ENCODE measurements at regions of chr12 and their contacts with region 1.

Region 1: DNA sequence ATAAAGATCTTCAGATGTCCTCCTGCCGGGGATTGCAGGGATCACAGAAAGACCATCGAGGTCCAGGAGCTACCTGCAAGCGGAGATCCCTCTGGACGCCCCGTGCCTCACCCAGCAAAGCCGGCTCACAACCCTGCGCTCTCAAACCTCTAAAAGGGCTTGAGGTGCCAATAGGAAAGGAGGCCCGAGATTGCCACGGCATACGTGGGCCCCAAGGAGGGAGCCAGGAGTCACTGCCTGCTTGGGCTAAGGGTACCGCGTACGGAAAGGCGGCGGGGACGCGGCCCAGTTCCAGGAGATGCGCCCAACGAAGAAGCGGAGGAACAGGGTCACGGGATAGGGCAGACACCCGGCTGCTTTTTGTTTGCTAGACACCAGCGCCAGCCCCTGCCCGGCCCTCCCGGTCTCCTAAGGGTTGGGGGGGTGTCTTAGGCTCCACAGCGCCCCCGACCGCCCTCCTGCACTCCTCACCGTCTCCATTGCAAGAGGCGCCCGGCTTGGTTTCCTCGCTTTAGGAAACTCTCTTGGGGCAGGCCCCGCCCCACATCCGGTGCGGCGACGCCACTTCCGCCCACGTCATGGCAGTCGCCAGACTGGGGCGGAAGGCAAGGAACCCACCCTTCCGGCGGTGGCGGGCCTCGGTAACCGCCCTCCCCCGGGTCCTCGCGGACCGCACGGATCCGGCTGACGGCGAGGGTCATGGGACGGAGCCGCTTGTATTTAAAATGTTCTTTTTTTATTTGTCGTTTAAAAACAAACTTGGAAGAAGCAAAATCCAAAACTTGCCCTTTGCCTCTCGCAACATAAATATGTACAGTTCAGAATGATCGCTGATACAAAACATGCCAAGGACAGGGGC is at the start of gene PRKAG1:
- DNase-seq: peak; percentile 97
- H3K4me3 Mint-ChIP-seq: peak within 1 kb of the TSS; percentile 90
- H3K27ac Mint-ChIP-seq: peak within 1 kb of the TSS; percentile 98
- H3K4me1 Mint-ChIP-seq: peaks cover 46% of the 10 kb centered on the region
- H3K27me3 Mint-ChIP-seq: no peaks in the 10 kb centered on the region
- total RNA-seq, gene PRKAG1: 65.9 to 70.2 TPM

Region 2: DNA sequence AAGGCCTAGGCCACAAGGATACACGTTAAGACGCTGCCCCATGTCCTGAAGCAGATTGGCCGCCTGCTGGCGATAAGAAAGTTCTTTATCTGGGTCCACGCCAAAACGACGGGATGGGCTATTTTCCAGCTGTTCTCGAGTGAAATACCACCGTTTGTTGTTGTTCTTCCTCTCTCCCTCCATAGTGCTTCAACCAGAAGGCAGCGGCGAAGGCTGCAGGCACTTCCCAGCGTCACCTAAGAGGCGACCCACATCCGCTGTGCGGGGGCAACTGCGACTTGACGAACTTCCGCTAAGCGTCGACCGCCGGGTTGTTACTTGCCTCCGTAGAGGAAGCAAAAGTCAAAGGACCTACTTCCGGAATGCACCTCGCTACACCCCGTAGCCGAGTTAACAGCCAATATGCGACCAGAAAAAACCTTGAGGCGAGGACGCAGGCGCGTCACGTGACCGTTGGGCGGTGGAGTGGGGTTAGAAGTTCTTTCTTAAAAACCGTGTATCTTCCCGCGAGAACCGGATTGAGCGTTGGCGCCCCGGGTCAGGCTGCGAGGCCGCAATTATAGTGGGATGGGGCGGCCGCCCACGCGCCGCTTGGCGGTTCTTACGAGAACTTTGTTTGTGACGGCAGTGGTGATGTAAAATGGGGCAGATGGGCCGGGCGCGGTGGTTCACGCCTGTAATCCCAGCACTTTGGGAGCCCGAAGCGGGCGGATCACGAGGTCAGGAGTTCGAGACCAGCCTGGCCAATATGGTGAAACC is 301.8 kb before region 1 on chr12 and contains the start of gene CCNT1:
- CTCF ChIA-PET with region 1: no interaction called
- POLR2A ChIA-PET with region 1: no interaction called
- DNase-seq: peak; percentile 99
- H3K4me3 Mint-ChIP-seq: peak within 1 kb of the TSS; percentile 87
- H3K27ac Mint-ChIP-seq: peak within 1 kb of the TSS; percentile 97
- H3K4me1 Mint-ChIP-seq: peaks cover 44% of the 10 kb centered on the region
- H3K27me3 Mint-ChIP-seq: no peaks in the 10 kb centered on the region
- total RNA-seq, gene CCNT1: 56.9 to 57.4 TPM

Region 3: DNA sequence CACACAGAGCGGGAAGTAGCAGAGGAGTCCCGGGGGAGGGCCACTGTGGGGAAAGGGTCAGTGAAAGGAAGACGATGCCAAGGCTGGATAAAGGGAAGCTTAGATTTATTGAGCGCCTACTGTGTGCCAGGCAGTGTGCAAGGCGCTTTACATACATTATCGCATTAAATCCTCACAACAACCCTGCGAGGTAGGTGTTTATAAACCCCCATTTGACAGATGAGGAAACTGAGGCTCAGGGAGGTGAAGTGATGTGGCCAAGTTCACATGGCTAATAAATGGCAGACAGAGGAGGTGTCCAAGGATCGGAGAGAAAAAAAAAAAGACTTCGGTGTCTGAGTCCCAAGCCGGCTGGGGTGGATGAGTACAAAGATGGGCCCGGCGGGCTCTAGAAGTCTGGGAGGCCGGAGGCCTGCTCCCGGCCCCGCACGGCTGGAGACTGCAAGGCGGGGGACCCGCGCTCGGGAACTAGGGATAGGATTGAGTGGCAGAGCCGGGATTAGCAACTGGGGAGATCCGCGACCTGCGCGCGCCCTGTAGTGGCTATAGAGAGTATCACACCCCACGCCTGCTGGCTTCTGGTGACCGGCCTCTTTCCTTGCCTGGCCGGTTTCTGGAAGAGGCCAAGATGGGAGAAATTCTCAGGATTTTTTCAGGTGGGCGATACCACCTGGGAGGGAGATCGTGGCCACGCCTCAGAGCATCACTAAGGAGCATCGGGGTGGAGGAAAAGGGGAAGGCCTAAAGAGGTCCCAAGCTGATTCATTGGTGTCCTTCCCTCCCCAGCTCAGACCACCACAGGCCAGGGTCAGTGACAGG is 23.2 kb before region 1 on chr12:
- CTCF ChIA-PET with region 1: interaction called, 116 read pairs
- POLR2A ChIA-PET with region 1: interaction called, 96 read pairs
- DNase-seq: peak; percentile 62
- H3K4me3 Mint-ChIP-seq: no peak overlapping the region
- H3K27ac Mint-ChIP-seq: no peak overlapping the region
- H3K4me1 Mint-ChIP-seq: peaks cover 32% of the 10 kb centered on the region
- H3K27me3 Mint-ChIP-seq: peaks cover 67% of the 10 kb centered on the region

Region 4: GRCh38 chr12:49031553-49032162 is 13.2 kb after region 1 on chr12:
- CTCF ChIA-PET with region 1: interaction called, 8 read pairs
- POLR2A ChIA-PET with region 1: interaction called, 10 read pairs
- DNase-seq: no peak
- H3K4me3 Mint-ChIP-seq: no peak overlapping the region
- H3K27ac Mint-ChIP-seq: no peak overlapping the region
- H3K4me1 Mint-ChIP-seq: no peaks in the 10 kb centered on the region
- H3K27me3 Mint-ChIP-seq: no peaks in the 10 kb centered on the region

Region 5: GRCh38 chr12:49043856-49044258 is 25.4 kb after region 1 on chr12:
- CTCF ChIA-PET with region 1: interaction called, 12 read pairs
- POLR2A ChIA-PET with region 1: interaction called, 5 read pairs
- DNase-seq: peak; percentile 83
- H3K4me3 Mint-ChIP-seq: no peak overlapping the region
- H3K27ac Mint-ChIP-seq: peak overlapping the region; percentile 51
- H3K4me1 Mint-ChIP-seq: peaks cover 5% of the 10 kb centered on the region
- H3K27me3 Mint-ChIP-seq: no peaks in the 10 kb centered on the region

Region 6: GRCh38 chr12:49060237-49061156 is 42.0 kb after region 1 on chr12 and contains the start of gene KMT2D:
- CTCF ChIA-PET with region 1: interaction called, 4 read pairs
- POLR2A ChIA-PET with region 1: interaction called, 10 read pairs
- DNase-seq: peak; percentile 88
- H3K4me3 Mint-ChIP-seq: peak within 1 kb of the TSS; percentile 95
- H3K27ac Mint-ChIP-seq: peak within 1 kb of the TSS; percentile 91
- H3K4me1 Mint-ChIP-seq: peaks cover 50% of the 10 kb centered on the region
- H3K27me3 Mint-ChIP-seq: no peaks in the 10 kb centered on the region
- total RNA-seq, gene KMT2D: 82.3 to 87.8 TPM

Measured in activated CD4-positive, alpha-beta memory T cell treated with anti-CD3 and anti-CD28 coated beads, Interleukin-2, amount 10 ng/mL, durations not matched to agents 7 days and 5 days (primary cell).